Heart left ventricle (tissue), 16 donors: ENCODE measurements at regions of chr1 and their contacts with region 1.

Region 1: DNA sequence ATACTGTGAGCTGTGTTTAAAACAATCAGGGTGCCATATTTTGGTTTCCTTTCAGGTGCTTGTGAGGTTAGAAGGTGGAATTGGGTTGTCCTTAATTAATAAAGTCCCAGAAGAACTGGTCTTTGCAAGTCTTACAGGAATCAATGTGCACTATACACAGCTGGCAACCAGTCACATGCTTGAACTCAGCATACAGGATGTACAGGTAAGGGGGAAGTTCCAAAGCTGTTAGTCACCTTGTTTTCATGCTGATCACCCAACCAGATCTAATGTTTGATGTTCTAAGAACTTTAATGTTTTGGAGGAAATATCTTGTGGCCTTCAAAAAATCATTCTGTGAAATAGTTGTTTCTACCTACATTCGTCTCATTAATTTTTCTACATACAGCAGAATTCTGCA is 156.3 kb downstream of the VPS13D start:
- DNase-seq: no peak
- ATAC-seq: no peak
- H3K4me3 ChIP-seq: no peak overlapping the region
- H3K27ac ChIP-seq: peak overlapping the region in 1 of 12 donors; percentile 48
- H3K4me1 ChIP-seq: peaks cover 0 to 20% (median 3%) of the 10 kb centered on the region in 12 donors
- H3K27me3 ChIP-seq: no peaks in the 10 kb centered on the region
- CTCF ChIP-seq: no peak
- POLR2A ChIP-seq: no peak

Region 2: DNA sequence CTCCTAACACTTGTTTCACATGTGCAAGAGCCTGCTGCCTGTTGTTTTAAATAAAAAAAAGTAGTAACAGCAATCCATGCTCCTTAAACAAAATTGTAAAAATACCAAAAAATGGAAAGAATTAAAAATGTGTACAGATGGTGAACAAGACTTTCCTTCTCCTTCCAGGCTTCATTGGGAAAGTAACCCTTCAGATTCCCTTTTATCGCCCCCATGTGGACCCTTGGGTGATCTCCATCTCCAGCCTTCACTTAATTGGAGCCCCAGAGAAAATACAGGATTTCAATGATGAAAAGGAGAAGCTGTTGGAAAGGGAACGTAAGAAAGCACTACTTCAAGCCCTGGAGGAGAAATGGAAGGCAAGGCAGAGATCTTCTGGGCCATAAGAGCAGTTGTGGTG is 142.1 kb before region 1 on chr1:
- intact Hi-C with region 1: loop called in 1 of 10 experiments (anchors 10 kb)
- DNase-seq: no peak
- ATAC-seq: no peak
- H3K4me3 ChIP-seq: no peak overlapping the region
- H3K27ac ChIP-seq: no peak overlapping the region
- H3K4me1 ChIP-seq: no peaks in the 10 kb centered on the region
- H3K27me3 ChIP-seq: no peaks in the 10 kb centered on the region
- CTCF ChIP-seq: peak in 8 of 12 donors; percentile 16 to 43 (median 28)
- POLR2A ChIP-seq: no peak

Region 3: DNA sequence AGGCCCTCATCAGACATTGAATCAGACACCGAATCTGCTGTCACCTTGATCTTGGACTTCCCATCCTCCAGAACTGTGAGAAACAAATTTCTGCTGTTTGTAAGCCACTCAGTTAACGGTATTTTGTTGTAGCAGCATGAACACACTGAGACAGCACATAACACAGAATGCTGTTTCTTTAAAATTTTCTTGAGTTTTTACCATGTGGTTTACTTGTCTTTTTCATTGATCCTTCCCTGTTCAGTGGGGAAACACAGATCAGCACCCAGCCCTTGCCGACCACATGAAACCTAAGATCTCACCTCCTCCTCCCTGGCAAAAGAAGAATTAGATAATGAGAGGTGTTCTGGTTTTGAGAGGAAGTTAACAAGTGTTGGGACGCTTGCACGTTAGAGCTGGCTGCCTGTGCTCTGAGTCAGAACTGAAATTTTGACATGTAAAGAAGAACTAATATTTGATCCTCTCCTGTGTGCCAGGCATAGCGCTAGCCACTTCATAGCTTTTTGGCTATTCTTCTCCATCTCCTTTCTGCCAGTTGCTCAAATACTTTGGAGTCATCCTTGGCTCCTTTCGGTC is 52.3 kb after region 1 on chr1:
- intact Hi-C with region 1: no loop called
- DNase-seq: no peak
- ATAC-seq: peak in 1 of 4 donors; percentile 8
- H3K4me3 ChIP-seq: no peak overlapping the region
- H3K27ac ChIP-seq: peak overlapping the region in 6 of 12 donors; percentile 3 to 77 (median 18)
- H3K4me1 ChIP-seq: peaks cover 5 to 65% (median 32%) of the 10 kb centered on the region in 12 donors
- H3K27me3 ChIP-seq: no peaks in the 10 kb centered on the region
- CTCF ChIP-seq: no peak
- POLR2A ChIP-seq: no peak